Transverse colon (tissue), 4 donors: ENCODE measurements at regions of chr7 and their contacts with region 1.

Region 1: DNA sequence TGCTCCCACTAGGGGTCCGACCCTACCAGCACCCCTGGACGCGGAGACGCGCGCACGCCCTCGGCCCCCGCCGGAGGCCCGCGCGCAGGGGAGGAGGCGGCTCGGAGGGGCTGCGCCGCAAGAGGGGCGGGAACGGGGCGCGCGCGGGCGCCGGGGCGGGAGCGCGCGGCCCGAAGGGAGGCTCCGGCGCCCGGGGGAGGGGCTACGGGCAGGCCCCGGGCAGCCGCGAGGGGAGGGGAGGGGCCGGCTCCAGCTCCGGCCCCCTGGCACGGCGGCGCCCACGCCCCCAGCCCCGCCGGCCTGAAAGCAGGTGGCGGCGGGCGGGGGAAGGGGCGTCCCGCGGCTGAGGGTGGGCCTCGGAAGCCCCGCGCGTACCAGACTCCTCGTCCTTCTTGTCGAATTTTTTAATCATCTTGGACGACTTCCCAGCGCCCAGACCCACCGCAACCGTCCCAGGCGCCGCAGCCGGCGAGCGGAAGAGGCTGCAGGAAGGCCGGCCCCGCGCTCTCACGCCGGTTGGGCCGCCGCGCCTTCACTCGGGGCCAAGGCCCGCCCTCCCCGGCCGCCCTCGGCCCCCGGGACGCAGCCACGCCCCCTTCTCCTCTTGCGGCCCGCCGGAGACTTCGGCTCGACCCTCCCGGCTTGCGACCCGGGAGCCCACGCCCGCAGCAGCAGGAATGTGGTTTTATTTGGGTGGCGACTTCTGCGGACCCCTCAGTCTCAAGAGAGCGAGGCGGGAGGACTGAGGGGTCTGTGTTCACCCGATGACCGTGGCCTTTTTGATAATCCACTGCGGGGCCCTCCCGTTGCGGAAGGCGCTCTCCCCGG is at the start of gene COPG2:
- DNase-seq: peak; percentile 89
- H3K4me3 ChIP-seq: peak within 1 kb of the TSS; percentile 81 to 86 (median 83)
- H3K27ac ChIP-seq: peak within 1 kb of the TSS; percentile 88 to 93 (median 91)
- H3K4me1 ChIP-seq: peaks cover 0 to 14% (median 10%) of the 10 kb centered on the region in 4 donors
- H3K27me3 ChIP-seq: no peaks in the 10 kb centered on the region
- CTCF ChIP-seq: no peak
- EP300 ChIP-seq: no peak
- POLR2A ChIP-seq: no peak
- total RNA-seq, gene COPG2: 3.4 to 19.7 (median 7.4) TPM

Region 2: GRCh38 chr7:130560970-130561369 is 107.5 kb before region 1 on chr7:
- in situ Hi-C with region 1: loop called in 1 of 4 experiments (anchors 25 kb)
- intact Hi-C with region 1: no loop called
- DNase-seq: no peak
- H3K4me3 ChIP-seq: no peak overlapping the region
- H3K27ac ChIP-seq: no peak overlapping the region
- H3K4me1 ChIP-seq: no peaks in the 10 kb centered on the region
- H3K27me3 ChIP-seq: no peaks in the 10 kb centered on the region
- CTCF ChIP-seq: peak in 4 of 5 experiments; percentile 25 to 37 (median 36)
- EP300 ChIP-seq: no peak
- POLR2A ChIP-seq: no peak

Region 3: GRCh38 chr7:130595986-130596385 is 72.5 kb before region 1 on chr7:
- in situ Hi-C with region 1: no loop called
- intact Hi-C with region 1: no loop called
- DNase-seq: no peak
- H3K4me3 ChIP-seq: no peak overlapping the region
- H3K27ac ChIP-seq: no peak overlapping the region
- H3K4me1 ChIP-seq: no peaks in the 10 kb centered on the region
- H3K27me3 ChIP-seq: no peaks in the 10 kb centered on the region
- CTCF ChIP-seq: no peak
- EP300 ChIP-seq: no peak
- POLR2A ChIP-seq: no peak

Region 4: DNA sequence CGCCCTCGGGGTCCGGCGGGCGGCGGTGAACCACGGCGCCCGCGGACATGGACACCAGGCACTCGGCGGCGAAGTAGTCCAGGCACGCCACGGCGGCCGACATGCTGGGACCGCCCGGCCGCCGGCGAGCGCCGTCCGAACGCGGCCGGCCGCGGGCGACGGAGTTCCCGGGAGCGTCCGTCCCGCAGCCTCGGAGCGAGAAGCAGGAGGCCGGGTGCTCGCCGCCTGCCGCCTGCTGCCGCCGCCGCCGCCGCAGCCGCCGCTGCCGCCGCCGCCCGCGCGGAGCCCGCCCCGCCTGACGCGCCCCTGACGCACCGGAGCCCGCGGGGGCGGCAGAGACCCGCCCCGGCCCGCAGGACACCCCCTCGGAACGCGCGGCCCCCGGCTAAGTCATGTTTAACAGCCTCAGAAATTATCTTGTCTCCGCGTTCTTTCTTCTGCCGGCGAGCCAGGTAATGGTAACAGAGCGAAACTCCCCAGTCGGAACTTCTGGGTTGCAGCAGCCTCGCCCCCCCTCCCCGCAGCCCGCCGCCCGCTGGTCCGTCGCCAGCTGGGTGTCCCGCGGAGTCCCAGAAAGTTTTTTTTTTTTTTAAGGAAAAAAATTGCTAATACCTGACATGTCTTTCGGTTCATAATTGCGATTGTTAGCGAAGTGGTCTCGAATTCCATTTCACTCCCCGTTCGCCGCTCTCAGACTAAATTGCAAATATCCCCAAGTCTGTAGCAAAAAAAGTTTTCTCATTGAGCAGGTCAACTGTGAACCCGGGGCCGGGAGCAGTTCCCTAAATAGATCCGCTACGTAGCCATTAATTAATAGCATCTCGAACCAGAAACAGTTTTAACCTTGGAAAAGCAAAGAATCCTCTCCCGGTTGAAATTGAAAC is 65.7 kb after region 1 on chr7 and contains the start of gene KLF14:
- in situ Hi-C with region 1: no loop called
- intact Hi-C with region 1: loop called (anchors 2 kb)
- DNase-seq: peak; percentile 17
- H3K4me3 ChIP-seq: peak within 1 kb of the TSS; percentile 22 to 65 (median 52)
- H3K27ac ChIP-seq: peak within 1 kb of the TSS in 3 of 4 donors; percentile 12 to 47 (median 46)
- H3K4me1 ChIP-seq: peaks cover 0 to 13% (median 6%) of the 10 kb centered on the region in 4 donors
- H3K27me3 ChIP-seq: peaks cover 98% of the 10 kb centered on the region
- CTCF ChIP-seq: no peak
- EP300 ChIP-seq: no peak
- POLR2A ChIP-seq: no peak
- total RNA-seq, gene KLF14: 3.0 TPM in 1 of 4 donors, not detected in the others